Posterior cingulate gyrus (tissue), 11 donors: ENCODE measurements at regions of chr20 and their contacts with region 1.

Region 1: GRCh38 chr20:58980700-58981627 is at the start of gene NELFCD:
- DNase-seq: peak; percentile 70 to 97 (median 78)

Region 2: DNA sequence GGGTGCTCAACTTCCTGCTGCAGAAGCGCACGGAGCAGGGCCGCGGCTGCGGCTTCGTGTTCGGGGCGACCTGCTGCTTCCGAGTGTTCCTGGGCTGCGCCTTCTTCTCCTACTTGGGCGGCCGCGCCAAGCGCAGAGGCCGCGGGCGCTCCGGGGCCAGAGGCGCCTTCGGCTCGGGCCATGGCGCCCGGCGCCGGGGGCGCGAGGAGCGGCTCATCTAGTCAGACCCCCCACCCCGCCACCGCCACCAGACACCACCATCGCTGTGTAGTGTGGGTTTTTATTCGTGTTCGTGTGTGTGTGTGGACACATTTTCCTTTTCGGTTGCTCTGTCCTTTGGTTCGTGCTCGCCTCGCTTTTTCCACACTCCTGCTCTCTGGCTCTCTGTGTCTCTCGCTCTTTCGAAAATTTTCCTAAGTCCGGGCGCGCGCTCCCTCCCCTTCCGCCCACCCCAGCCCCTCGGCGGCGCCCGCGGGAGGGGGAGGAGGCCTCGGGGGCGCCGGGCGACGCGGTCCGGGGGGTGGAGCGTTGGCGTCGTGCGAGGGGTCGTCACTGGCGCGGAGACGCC is 90.4 kb before region 1 on chr20:
- intact Hi-C with region 1: loop called (anchors 2 kb)
- DNase-seq: peak; percentile 44 to 94 (median 58)

Region 3: DNA sequence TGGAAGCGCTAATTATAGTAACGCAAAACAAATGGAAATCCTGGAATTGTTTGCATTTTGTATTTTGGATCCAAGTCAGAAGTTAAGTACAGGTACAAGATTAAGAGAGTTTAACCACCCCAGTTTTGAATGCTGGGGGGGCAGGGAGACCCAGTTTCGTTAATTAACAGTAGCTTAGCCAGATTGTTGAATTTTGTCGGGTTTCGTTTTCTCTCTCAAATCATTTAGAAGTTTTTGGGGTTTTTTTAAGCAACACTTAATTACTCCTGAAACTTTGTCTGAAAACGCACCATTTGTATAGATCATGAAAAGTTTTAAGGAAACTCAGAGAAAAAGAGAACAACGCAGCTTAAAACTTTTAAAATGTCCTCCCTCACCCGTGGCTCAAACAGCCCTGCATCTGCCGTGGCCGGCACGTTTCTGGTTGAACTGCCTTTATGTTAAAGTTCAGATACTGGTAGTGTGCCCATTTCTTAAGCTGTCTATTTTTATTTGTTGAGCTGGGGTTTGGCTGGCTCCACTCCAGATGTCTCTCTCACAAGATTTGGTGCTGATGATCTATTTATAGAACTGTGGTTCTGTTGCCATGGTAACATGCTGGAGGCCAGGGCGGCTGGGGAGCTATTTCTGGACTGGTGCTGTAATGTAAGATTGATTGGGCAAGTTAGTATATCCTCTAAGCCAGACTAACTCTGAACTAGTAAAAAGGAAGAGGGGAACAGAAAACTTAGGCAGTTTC is 73.4 kb before region 1 on chr20:
- intact Hi-C with region 1: loop called (anchors 2 kb)
- DNase-seq: peak; percentile 50 to 94 (median 68)

Region 4: DNA sequence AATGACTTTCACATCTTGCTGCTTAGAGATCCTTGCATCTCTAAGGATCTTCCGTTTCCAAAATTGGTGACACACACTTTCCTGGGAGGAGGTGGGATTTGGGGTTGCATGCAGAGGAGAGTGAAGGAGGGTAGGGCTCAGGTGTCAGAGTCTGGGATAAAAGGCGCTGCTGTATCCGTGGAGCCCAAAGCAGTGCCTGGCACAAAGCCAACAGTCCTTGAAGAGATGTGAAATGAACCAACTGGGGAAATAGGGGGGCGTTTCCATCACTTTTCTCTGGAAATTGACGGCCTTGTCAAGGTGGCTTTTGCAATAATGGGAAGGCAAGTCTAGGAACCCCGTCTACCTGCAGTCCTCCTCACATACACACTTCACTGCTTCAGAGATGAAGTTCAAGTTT is 59.4 kb before region 1 on chr20:
- intact Hi-C with region 1: no loop called
- DNase-seq: no peak

Region 5: DNA sequence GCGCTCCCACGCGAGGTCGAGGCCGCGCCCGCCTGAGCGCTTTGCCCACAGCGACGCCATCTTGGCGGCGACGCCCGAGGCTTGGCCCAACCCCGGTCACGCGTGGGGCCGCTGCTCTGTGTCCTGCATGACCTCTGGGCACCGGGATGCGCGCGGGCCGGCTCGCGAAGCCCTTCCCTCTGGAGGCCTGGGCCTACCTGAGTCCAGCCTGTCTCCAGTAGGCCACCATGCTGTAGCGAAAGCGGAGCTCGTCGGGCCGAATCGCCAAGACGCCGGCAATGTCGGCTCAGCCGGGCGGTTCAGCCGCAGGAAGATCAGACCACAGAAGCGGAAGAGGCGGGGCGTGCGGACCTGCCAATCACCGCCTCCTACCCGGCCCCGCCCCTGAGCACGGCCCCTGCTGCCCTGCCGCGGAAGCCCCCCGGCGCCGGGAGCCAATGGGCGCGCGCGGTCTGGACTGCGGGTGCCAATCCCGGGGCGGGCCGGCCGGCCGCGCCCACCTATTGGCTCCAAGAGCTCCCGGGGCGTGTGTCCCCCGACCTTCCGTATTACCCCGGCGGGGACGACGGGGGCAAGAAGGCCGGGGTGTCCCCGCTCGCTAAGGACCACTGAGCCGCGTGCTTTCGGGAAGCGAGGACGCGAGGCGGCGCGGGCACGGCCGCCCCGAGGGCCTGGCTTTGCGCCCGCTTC is 51.2 kb after region 1 on chr20 and contains the start of gene ATP5F1E:
- intact Hi-C with region 1: loop called (anchors 5 kb)
- DNase-seq: peak; percentile 91 to 100 (median 96)